HepG2 (cell line): ENCODE measurements at regions of chr10 and their contacts with region 1.

Region 1: DNA sequence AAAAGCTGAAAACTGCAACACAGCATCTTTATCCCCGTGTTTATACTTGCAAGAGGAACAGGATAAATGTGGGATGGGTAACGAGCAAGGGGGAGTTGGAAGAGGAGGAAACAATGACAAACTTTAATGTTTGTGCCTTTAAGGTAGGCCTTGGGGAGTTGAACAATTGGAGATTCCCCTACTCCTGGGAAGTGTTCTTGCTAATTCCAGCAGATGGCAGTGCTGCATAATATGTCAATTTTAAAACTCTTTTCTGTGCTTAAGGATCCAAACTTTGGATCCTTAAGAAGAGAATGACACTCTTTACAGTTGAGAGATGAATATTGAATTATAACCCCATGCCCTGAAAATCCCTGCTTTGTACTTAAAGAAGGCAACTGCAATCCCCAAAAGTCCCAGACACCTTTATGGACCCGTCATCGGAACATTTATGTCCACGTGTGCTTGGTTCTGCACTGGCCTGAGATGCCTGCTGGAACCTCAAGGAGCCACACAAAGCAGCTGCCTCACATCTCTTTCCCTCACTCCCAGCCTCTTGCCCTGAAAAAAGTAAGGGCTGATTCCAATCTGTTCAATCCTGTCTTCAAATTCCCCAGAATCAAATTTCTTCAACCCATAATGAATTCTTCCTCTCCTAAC is 12.0 kb downstream of the IFIT5 start:
- DNase-seq: peak; percentile 41
- ATAC-seq: peak; percentile 88
- H3K4me3 ChIP-seq: no peak overlapping the region
- H3K27ac ChIP-seq: no peak overlapping the region
- H3K4me1 ChIP-seq: peaks cover 20% of the 10 kb centered on the region
- H3K27me3 ChIP-seq: no peaks in the 10 kb centered on the region
- CTCF ChIP-seq: peak; percentile 84
- EP300 ChIP-seq: no peak
- POLR2A ChIP-seq: no peak
- RAD21 ChIP-seq: peak; percentile 62

Region 2: GRCh38 chr10:89563861-89564478 is 137.6 kb after region 1 on chr10:
- CTCF ChIA-PET with region 1: interaction called, 46 read pairs
- POLR2A ChIA-PET with region 1: no interaction called
- in situ Hi-C with region 1: loop called (anchors 5 kb)
- intact Hi-C with region 1: loop called (anchors 1 kb)
- DNase-seq: peak; percentile 32
- ATAC-seq: peak; percentile 64
- H3K4me3 ChIP-seq: no peak overlapping the region
- H3K27ac ChIP-seq: no peak overlapping the region
- H3K4me1 ChIP-seq: peaks cover 18% of the 10 kb centered on the region
- H3K27me3 ChIP-seq: no peaks in the 10 kb centered on the region; a peak in 1 of 5 replicates
- CTCF ChIP-seq: peak; percentile 67
- EP300 ChIP-seq: no peak
- POLR2A ChIP-seq: no peak
- RAD21 ChIP-seq: peak; percentile 61

Region 3: DNA sequence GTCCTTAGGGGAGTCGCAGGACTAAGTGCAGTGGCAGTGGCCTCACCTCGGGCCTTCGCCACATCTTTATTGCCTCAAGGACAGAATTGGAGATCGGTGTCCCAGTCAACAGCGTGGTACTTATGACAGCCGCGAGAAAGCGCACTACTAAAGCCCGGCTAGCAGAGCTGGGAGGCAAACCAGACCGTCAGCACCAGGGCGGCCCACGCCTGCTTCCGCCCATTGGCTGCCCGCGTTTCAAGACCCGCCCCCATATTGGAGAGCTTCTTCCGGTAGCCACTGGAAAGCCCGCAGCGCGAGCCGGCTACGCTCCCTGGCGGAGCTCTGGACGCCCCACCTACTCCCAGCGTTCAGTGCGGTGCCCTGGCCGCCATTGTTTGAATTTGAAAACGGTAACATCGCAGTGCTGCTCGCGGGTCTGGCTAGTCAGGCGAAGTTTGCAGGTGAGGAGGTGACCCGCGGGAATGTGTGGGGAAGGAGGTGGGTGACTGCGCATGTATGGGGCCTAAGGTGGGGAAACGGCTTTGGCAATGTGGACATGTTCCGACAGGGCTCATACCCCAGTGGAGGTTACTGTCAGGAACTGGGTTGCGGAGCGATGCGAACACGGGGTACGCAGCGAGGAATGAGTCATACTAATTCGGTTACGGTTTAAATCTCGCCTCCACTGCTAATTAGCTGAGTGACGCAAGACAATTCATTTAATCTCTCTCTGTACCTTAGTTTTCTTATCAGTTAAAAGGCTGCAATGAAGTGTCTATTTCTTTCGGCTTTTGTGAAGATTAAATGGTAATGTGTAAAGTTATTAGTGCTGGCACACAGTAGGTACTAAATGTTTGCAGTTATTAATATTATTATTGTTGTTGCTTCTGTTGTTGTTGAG is 275.1 kb after region 1 on chr10 and contains the start of gene KIF20B:
- CTCF ChIA-PET with region 1: no interaction called
- POLR2A ChIA-PET with region 1: no interaction called
- in situ Hi-C with region 1: no loop called
- intact Hi-C with region 1: loop called (anchors 2 kb)
- DNase-seq: peak; percentile 94
- ATAC-seq: peak; percentile 96
- H3K4me3 ChIP-seq: peak within 1 kb of the TSS; percentile 82 to 94 (median 93)
- H3K27ac ChIP-seq: peak within 1 kb of the TSS; percentile 91
- H3K4me1 ChIP-seq: peaks cover 74% of the 10 kb centered on the region
- H3K27me3 ChIP-seq: peaks cover 0 to 7% of the 10 kb centered on the region in 2 experiments; a peak in 1 of 5 replicates
- CTCF ChIP-seq: peak; percentile 81
- EP300 ChIP-seq: no peak
- POLR2A ChIP-seq: peak; percentile 94 to 95
- RAD21 ChIP-seq: peak; percentile 76
- total RNA-seq, gene KIF20B: 38.6 and 83.9 TPM in 2 replicates